PC-9 (cell line): ENCODE measurements at regions of chr5 and their contacts with region 1.

Region 1: GRCh38 chr5:159262859-159263567 is at the start of gene UBLCP1:
- DNase-seq: peak; percentile 76 to 78
- H3K4me3 ChIP-seq: peak within 1 kb of the TSS; percentile 91
- H3K27ac ChIP-seq: peak within 1 kb of the TSS; percentile 80
- H3K4me1 ChIP-seq: peaks cover 19% of the 10 kb centered on the region
- H3K27me3 ChIP-seq: no peaks in the 10 kb centered on the region
- CTCF ChIP-seq: no peak
- total RNA-seq, gene UBLCP1: 22.1 and 27.8 TPM in 2 replicates

Region 2: DNA sequence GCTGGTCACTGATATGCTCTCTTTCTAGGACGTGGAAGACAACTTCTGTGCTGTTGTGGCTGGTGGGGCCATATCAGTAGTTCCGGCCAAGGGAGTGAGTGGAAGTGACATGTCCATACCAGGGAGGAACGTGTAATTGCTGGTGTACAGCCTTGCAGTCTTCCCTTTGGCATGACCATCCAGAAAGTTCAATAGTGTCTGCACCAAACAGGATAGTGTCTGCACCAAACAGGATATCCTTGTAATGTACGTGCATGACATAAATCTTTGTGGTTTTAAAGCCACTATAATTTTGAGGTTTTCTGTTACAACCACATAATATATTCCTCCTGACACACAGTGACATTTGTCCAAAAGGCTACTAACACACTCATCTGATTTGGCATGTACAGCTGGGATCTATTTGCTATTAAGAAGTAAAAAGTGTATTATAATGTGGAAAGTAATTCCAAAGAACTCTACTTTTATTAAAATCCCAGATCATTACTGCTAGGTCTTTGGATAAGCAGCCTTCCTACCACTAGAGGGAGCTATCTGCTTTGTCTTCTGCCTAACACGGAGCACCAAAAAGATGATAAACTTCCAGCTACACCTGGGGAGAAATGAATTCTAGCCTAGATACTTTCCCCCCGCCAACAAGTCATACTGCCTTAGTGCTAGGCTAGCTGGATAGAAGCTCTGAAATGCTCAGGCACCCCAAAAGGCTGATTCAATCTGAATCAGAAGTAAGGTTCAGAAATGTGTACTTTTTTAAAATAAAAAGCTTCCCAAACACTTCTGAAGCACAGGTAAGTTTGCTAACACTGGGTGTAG is 106.4 kb before region 1 on chr5:
- CTCF ChIA-PET with region 1: no interaction called
- POLR2A ChIA-PET with region 1: no interaction called
- intact Hi-C with region 1: loop called (anchors 1 kb)
- DNase-seq: peak; percentile 38 to 42
- H3K4me3 ChIP-seq: no peak overlapping the region
- H3K27ac ChIP-seq: peak overlapping the region; percentile 25; the same call in 1 of the 2 replicates
- H3K4me1 ChIP-seq: no peaks in the 10 kb centered on the region
- H3K27me3 ChIP-seq: no peaks in the 10 kb centered on the region
- CTCF ChIP-seq: peak; percentile 92

Region 3: GRCh38 chr5:159178978-159179377 is 84.0 kb before region 1 on chr5:
- CTCF ChIA-PET with region 1: interaction called, 4 read pairs
- POLR2A ChIA-PET with region 1: no interaction called
- intact Hi-C with region 1: loop called (anchors 2 kb)
- DNase-seq: peak; percentile 31 to 68
- H3K4me3 ChIP-seq: no peak overlapping the region
- H3K27ac ChIP-seq: peak overlapping the region; percentile 38
- H3K4me1 ChIP-seq: peaks cover 37% of the 10 kb centered on the region
- H3K27me3 ChIP-seq: no peaks in the 10 kb centered on the region
- CTCF ChIP-seq: no peak